Sciatic nerve (tissue), 2 donors: ENCODE measurements at regions of chr3 and their contacts with region 1.

Region 1: DNA sequence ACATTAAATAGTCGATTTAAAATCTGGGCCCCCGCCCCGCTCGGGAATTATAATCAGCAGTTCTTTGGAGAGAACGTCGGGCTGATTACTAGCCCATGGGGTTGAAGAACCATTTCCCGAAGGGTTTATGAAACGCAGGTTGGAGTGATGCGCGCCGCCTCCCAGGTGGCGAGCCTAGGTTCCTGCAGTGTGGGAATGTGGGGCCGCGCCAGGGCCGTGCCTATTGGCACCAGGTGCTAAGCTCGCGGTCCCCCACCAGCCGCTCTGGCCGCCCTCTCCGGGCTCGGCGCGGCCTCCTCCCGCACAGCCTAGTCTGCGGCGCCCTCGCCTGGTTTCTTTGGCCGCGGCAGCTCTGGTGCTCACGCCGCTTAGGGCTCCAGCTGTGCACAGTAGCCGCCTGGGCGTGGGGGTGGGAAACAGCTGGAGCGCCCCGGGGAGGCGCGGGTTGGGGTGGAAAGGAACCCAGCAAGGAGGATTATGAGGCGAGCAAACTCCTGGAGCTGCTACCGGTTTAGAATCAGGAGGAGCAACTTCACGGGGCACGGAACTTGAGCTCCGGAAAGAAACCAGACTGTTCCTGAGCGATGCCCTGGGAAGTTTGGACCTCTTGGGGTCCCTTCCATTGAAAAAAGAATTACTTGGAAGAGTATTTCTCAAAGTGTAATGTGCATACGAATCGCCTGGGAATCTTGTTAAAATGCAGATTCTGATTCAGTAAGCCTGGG is 5.6 kb upstream of the MECOM start:
- DNase-seq: peak; percentile 82
- ATAC-seq: peak; percentile 96

Region 2: GRCh38 chr3:168467115-168467714 is 1201.9 kb before region 1 on chr3:
- intact Hi-C with region 1: no loop called
- DNase-seq: no peak
- ATAC-seq: peak; percentile 59

Region 3: GRCh38 chr3:169149349-169149890 is 519.7 kb before region 1 on chr3:
- intact Hi-C with region 1: loop called (anchors 5 kb)
- DNase-seq: peak; percentile 83
- ATAC-seq: peak; percentile 89

Region 4: DNA sequence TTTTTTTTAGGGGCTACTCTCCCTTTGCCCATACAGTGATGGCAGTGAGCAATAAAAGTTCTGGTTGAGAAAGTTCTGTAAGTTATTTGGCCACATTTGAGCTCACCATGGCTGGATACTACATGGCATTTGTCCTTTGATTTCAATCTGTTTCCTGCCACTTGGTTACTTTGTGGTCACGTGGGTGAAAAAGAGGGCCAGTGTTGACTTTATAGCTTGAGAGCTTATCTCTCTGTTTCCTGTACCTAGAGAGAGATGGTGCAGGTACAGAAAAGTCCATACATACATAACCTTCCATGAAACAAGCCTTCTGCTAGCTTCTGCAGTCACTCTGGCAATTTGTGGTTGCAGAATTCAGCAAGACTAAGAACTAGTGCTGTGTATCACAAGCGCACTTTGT is 17.8 kb after region 1 on chr3:
- intact Hi-C with region 1: no loop called
- DNase-seq: no peak
- ATAC-seq: no peak